Thyroid gland (tissue), 4 donors: ENCODE measurements at regions of chr13 and their contacts with region 1.

Region 1: DNA sequence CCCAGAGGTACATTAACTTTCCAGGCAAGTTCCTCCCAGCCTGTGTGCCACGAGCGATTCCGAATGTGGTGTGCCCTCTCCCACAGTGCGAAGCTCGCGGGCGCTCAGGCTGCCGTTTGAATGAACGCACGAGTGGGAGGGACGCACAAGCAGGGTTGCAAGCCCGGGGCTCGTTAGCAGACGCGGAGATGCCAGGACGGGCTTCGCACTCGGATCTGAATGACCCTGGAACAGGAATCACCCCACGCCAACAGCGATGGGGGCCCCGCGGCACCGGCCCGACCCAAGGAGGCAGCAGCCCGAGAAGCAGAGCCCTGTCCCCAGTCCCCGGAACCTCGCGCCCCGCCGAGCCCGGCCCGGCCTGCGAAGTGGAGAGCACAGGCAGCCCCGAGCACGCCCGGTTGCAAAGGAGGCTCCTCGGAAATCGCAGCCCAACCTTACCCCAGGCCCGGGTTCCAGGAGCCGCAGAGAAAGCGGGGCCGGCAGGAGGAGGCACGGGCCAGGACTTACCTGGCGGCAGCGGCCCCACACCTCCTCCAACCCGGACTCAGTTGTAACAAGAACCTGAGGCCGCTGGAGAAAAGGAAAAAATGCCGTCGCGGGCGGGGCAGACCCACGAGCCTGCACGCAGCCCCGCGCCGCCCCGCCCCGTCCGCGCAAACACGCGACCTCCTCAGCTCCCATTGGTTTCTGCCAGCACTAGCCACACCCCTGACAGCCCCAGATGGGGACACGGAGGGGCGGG is at the start of gene SLC25A30:
- DNase-seq: peak; percentile 98 to 99
- H3K4me3 ChIP-seq: peak within 1 kb of the TSS; percentile 31 to 62 (median 36)
- H3K27ac ChIP-seq: peak within 1 kb of the TSS; percentile 87 to 94 (median 90)
- H3K4me1 ChIP-seq: peaks cover 18 to 21% of the 10 kb centered on the region in 2 donors
- H3K27me3 ChIP-seq: no peaks in the 10 kb centered on the region
- CTCF ChIP-seq: no peak
- POLR2A ChIP-seq: peak in 1 of 2 donors; percentile 92
- total RNA-seq, gene SLC25A30: 11.3 to 16.1 (median 15.9) TPM

Region 2: DNA sequence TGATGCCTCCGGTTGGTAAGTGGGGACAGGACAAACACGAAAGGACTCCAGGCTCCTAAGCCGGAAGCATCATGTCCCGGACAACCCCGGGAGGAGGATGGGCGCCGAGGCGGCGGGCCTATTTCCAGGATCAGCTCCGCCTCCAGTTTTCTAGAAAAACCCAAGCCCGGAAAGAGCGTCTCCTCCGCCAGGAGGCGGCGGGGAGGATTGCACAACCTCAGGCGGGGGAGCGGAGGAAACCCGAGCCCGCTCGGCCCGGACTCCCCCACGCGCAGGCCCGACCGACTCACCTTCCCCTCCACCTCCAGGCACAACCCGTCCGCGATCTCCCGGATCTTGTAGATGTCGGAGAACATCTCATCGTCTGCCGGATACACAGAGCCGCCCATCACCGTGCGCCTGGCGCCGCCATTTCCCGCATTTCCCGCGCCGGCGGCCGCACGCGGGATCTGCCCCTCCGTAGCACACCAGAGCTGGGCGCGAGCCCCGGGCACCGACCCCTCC is 77.5 kb before region 1 on chr13:
- intact Hi-C with region 1: loop called (anchors 10 kb)
- DNase-seq: peak; percentile 90 to 93
- H3K4me3 ChIP-seq: peak overlapping the region; percentile 57 to 99 (median 89)
- H3K27ac ChIP-seq: peak overlapping the region; percentile 99 to 100 (median 100)
- H3K4me1 ChIP-seq: peaks cover 19 to 46% of the 10 kb centered on the region in 2 donors
- H3K27me3 ChIP-seq: no peaks in the 10 kb centered on the region
- CTCF ChIP-seq: peak in 5 of 6 experiments; percentile 25 to 63 (median 56)
- POLR2A ChIP-seq: peak in 1 of 2 donors; percentile 28